Dendritic cell treated with granulocyte-macrophage colony-stimulating factor and Interleukin-4, amounts not matched to agents 40 ng/mL and 50 ng/mL, for 4 days (primary cell): ENCODE measurements at regions of chrX and their contacts with region 1.

Region 1: GRCh38 chrX:31213941-31214340 is 142.1 kb upstream of the FTHL17 start:
- H3K4me3 Mint-ChIP-seq: no peak overlapping the region
- H3K27ac Mint-ChIP-seq: no peak overlapping the region
- H3K4me1 Mint-ChIP-seq: no peaks in the 10 kb centered on the region
- H3K27me3 Mint-ChIP-seq: no peaks in the 10 kb centered on the region

Region 2: DNA sequence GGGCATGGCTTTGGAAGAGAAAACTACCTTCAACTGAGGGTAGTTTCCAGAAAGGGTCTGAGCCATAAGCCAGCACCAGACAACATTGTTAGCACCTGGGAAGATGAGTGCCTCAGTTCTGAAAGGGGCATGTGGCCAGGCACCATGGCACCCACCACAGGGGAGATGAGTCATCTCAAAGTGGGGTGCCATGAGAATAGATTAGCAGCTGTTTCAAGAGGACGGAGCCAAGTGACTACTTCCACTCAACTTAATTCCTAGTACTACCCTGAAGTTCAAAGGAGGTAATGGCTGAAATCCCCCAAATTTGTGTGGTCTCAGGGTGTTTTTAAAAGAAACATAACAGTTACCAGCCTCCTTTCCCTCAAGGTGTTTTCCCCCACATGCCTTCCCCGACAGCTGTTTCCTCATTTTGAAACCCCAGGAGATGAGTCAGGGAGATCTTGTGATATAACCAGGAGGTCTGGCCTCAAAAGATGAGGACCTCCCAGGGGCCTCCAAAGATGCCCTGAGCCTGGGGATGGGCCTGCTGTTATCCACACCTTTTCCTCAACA is 114.3 kb before region 1 on chrX:
- intact Hi-C with region 1: no loop called
- H3K4me3 Mint-ChIP-seq: no peak overlapping the region
- H3K27ac Mint-ChIP-seq: no peak overlapping the region
- H3K4me1 Mint-ChIP-seq: no peaks in the 10 kb centered on the region
- H3K27me3 Mint-ChIP-seq: no peaks in the 10 kb centered on the region

Region 3: DNA sequence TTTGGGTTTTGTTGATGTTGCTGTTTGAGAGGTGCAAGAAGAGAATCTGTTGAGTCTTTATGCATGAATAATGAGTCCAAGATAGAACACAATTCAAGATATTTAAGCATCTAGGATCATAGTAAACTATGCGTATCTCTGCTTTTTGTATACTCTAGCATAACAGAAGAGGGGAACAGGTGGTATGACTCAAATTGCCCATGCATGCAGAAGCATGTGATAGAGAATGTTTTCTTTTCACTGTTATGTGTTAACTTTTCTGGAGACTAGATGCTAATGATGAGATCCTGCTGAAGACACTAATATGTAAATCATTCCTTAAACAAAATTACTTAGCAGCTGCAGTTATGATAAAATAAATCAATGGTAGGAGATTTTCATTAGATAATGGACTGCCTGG is 23.2 kb after region 1 on chrX:
- intact Hi-C with region 1: no loop called
- H3K4me3 Mint-ChIP-seq: no peak overlapping the region
- H3K27ac Mint-ChIP-seq: no peak overlapping the region
- H3K4me1 Mint-ChIP-seq: peaks cover 6% of the 10 kb centered on the region
- H3K27me3 Mint-ChIP-seq: peaks cover 2% of the 10 kb centered on the region

Region 4: DNA sequence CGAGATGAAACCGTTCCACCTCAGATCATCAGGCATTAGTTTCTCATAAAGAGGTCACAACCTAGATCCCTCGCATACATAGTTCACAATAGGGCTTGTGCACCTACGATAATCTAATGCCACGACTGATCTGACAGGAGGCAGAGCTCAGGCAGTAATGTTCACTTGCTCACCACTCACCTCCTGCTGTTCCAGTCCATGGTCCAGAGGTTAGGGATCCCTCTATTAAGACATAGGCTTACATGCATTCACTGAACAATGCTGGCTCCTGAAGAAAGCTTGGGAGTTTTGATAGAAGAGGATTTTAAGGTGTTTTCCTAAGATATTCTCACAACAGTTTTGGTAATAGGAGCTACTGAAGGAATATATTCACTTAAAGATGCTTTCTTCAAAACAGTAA is 94.0 kb after region 1 on chrX:
- intact Hi-C with region 1: no loop called
- H3K4me3 Mint-ChIP-seq: no peak overlapping the region
- H3K27ac Mint-ChIP-seq: no peak overlapping the region
- H3K4me1 Mint-ChIP-seq: no peaks in the 10 kb centered on the region
- H3K27me3 Mint-ChIP-seq: peaks cover 5% of the 10 kb centered on the region

Region 5: GRCh38 chrX:31658360-31658759 is 444.4 kb after region 1 on chrX:
- intact Hi-C with region 1: loop called (anchors 5 kb)
- H3K4me3 Mint-ChIP-seq: no peak overlapping the region
- H3K27ac Mint-ChIP-seq: no peak overlapping the region
- H3K4me1 Mint-ChIP-seq: peaks cover 5% of the 10 kb centered on the region
- H3K27me3 Mint-ChIP-seq: peaks cover 2% of the 10 kb centered on the region